ENCODE measurements at regions of chr3 and their contacts with region 1.

Region 1: GRCh38 chr3:179322286-179323196 is at the start of gene ZNF639:
- DNase-seq: peak; percentile 34 to 93
- H3K4me3 ChIP-seq: peak within 1 kb of the TSS; percentile 86 to 92
- H3K27ac ChIP-seq: peak within 1 kb of the TSS; percentile 94 to 98
- H3K4me1 ChIP-seq: peaks cover 3 to 16% of the 10 kb centered on the region in 2 donors
- H3K27me3 ChIP-seq: no peaks in the 10 kb centered on the region
- CTCF ChIP-seq: peak; percentile 67 to 90 (median 70)
- total RNA-seq, gene ZNF639: 21.4 TPM

Region 2: GRCh38 chr3:179105881-179106280 is 216.7 kb before region 1 on chr3:
- intact Hi-C with region 1: loop called (anchors 2 kb)
- DNase-seq: no peak
- H3K4me3 ChIP-seq: no peak overlapping the region
- H3K27ac ChIP-seq: no peak overlapping the region
- H3K4me1 ChIP-seq: no peaks in the 10 kb centered on the region
- H3K27me3 ChIP-seq: no peaks in the 10 kb centered on the region
- CTCF ChIP-seq: no peak

Region 3: DNA sequence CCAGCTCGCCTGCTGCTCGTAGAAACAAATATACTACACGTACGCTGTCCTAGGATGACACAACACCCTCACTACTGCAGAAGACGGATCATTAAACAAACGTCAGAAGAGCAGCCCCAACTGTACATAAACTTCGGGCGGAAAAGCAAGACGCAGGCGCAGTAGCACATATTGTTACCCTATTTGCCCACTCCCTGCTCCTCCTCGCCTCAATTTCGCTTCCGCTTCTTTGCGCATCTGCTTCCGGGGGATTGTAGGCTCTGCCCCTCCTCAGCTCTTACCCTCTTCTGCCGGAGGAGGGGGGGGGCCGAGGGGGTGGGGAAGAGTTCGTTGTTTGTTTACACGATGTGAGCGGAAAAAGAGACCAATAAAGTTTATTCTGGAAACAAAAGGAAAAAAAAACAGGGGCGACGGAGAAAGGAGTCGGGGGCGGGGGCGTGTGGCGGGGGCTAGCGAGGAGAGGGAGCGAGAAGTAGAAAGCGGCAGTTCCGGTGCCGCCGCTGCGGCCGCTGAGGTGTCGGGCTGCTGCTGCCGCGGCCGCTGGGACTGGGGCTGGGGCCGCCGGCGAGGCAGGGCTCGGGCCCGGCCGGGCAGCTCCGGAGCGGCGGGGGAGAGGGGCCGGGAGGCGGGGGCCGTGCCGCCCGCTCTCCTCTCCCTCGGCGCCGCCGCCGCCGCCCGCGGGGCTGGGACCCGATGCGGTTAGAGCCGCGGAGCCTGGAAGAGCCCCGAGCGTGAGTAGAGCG is 174.5 kb before region 1 on chr3 and contains the start of gene PIK3CA:
- intact Hi-C with region 1: loop called (anchors 1 kb)
- DNase-seq: peak; percentile 90 to 98
- H3K4me3 ChIP-seq: peak within 1 kb of the TSS; percentile 95 to 97
- H3K27ac ChIP-seq: peak within 1 kb of the TSS; percentile 93 to 99
- H3K4me1 ChIP-seq: peaks cover 0 to 14% of the 10 kb centered on the region in 2 donors
- H3K27me3 ChIP-seq: no peaks in the 10 kb centered on the region
- CTCF ChIP-seq: no peak
- total RNA-seq, gene PIK3CA: 12.7 TPM

Region 4: GRCh38 chr3:179347345-179348194 is 25.0 kb after region 1 on chr3 and contains the start of gene MFN1:
- intact Hi-C with region 1: loop called (anchors 1 kb)
- DNase-seq: peak; percentile 90 to 98
- H3K4me3 ChIP-seq: peak within 1 kb of the TSS; percentile 75 to 93
- H3K27ac ChIP-seq: peak within 1 kb of the TSS; percentile 82 to 90
- H3K4me1 ChIP-seq: peaks cover 7 to 20% of the 10 kb centered on the region in 2 donors
- H3K27me3 ChIP-seq: no peaks in the 10 kb centered on the region
- CTCF ChIP-seq: no peak
- total RNA-seq, gene MFN1: 25.1 TPM

Region 5: GRCh38 chr3:179562591-179563270 is 240.2 kb after region 1 on chr3 and contains the start of gene ACTL6A:
- intact Hi-C with region 1: loop called (anchors 2 kb)
- DNase-seq: peak; percentile 100
- H3K4me3 ChIP-seq: peak within 1 kb of the TSS; percentile 78 to 85
- H3K27ac ChIP-seq: peak within 1 kb of the TSS; percentile 70 to 84
- H3K4me1 ChIP-seq: peaks cover 0 to 3% of the 10 kb centered on the region in 2 donors
- H3K27me3 ChIP-seq: no peaks in the 10 kb centered on the region
- CTCF ChIP-seq: no peak
- total RNA-seq, gene ACTL6A: 23.9 TPM

Region 6: GRCh38 chr3:179653096-179653797 is 330.7 kb after region 1 on chr3:
- intact Hi-C with region 1: loop called (anchors 2 kb)
- DNase-seq: peak in 1 of 2 donors; percentile 82
- H3K4me3 ChIP-seq: peak overlapping the region; percentile 90
- H3K27ac ChIP-seq: peak overlapping the region; percentile 88 to 92
- H3K4me1 ChIP-seq: no peaks in the 10 kb centered on the region
- H3K27me3 ChIP-seq: no peaks in the 10 kb centered on the region
- CTCF ChIP-seq: peak in 1 of 3 experiments; percentile 9